Activated CD8-positive, alpha-beta T cell treated with anti-CD3 and anti-CD28 coated beads, Interleukin-2, amount 10 ng/mL, durations not matched to agents 7 days and 5 days (primary cell): ENCODE measurements at regions of chr17 and their contacts with region 1.

Region 1: DNA sequence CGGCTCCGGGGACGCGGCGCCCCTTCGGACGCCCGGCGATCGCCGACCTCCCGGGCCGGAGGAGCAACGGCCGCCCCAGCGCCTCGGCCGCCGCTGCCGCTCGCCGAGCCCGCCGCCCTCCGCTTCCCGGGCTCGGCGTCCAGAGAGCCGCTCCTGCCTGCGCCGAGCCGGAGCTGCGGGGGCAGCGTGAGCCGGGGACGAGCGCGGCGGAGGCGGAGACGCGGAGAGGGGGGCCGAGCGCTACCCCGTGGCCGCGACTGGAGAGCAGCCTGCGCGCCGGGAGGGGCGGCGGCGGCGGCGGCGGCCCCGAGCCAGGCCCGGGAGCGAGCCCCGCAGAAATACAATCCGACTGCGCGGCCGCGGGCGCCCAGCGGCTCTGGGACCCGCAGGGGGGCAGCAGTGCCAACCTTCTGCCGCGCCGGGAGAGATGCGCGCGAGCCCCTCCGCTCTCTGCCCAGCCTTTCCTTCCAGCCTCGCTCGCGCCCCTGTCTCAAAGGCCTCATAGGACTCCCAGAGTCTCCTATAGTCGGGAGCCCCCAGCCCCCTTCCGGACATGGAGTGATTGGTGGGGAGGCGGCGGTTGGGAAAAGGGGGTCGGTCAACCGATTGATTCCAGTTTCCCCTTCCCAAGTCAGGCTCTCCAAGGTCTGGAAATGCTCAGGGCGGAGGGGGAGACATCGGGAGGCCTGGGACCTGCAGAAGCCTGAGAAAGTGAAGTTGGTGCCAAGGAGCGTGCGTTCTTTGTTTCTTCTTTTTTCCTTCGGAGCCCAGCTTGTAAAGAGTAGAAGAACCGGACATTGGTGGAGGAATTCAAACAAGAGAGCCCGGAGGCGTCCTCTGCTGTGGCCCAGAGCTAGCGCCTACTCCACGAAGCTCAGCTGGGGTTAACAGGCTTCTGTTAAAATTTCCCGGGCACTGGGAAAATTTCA is 1.1 kb upstream of the SDK2 start:
- DNase-seq: peak; percentile 65
- ATAC-seq: peak; percentile 63
- H3K4me3 Mint-ChIP-seq: peak overlapping the region; percentile 57
- H3K27ac Mint-ChIP-seq: no peak overlapping the region
- H3K4me1 Mint-ChIP-seq: peaks cover 25% of the 10 kb centered on the region
- H3K27me3 Mint-ChIP-seq: peaks cover 44% of the 10 kb centered on the region

Region 2: GRCh38 chr17:73429440-73430164 is 215.7 kb before region 1 on chr17:
- CTCF ChIA-PET with region 1: interaction called, 41 read pairs
- POLR2A ChIA-PET with region 1: no interaction called
- DNase-seq: peak; percentile 91
- ATAC-seq: peak; percentile 94
- H3K4me3 Mint-ChIP-seq: no peak overlapping the region
- H3K27ac Mint-ChIP-seq: peak overlapping the region; percentile 72
- H3K4me1 Mint-ChIP-seq: peaks cover 24% of the 10 kb centered on the region
- H3K27me3 Mint-ChIP-seq: no peaks in the 10 kb centered on the region

Region 3: GRCh38 chr17:73585583-73585982 is 59.7 kb before region 1 on chr17:
- CTCF ChIA-PET with region 1: interaction called, 19 read pairs
- POLR2A ChIA-PET with region 1: no interaction called
- DNase-seq: no peak
- ATAC-seq: no peak
- H3K4me3 Mint-ChIP-seq: no peak overlapping the region
- H3K27ac Mint-ChIP-seq: no peak overlapping the region
- H3K4me1 Mint-ChIP-seq: peaks cover 44% of the 10 kb centered on the region
- H3K27me3 Mint-ChIP-seq: no peaks in the 10 kb centered on the region

Region 4: GRCh38 chr17:73635101-73635817 is 10.1 kb before region 1 on chr17:
- CTCF ChIA-PET with region 1: interaction called, 10 read pairs
- POLR2A ChIA-PET with region 1: no interaction called
- DNase-seq: no peak
- ATAC-seq: no peak
- H3K4me3 Mint-ChIP-seq: no peak overlapping the region
- H3K27ac Mint-ChIP-seq: no peak overlapping the region
- H3K4me1 Mint-ChIP-seq: peaks cover 5% of the 10 kb centered on the region
- H3K27me3 Mint-ChIP-seq: no peaks in the 10 kb centered on the region

Region 5: DNA sequence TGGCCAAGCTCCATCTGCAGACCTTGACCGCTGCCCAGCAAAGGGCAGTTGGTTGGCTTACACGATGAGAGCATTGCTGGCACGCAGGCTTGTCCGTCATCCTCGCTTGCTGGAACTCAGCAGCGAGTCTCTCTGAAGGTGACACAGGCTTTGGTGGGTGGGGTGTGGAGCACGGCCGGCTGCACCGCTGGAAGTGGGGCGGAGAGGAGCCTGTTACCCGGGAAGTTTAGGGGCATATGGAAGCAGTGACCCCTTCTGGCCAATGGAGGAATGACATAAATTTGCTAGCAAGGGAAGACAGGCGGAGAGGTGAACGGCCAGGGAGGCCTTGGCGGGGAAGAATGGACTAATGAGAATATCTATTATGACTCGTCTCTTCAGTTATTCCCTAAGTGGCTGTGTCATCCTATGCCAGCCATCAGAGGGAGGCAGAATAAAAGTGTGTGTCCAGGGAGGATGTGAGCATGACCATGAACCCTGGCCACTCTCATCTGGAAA is 64.8 kb after region 1 on chr17:
- CTCF ChIA-PET with region 1: interaction called, 35 read pairs
- POLR2A ChIA-PET with region 1: interaction called, 4 read pairs
- DNase-seq: peak; percentile 82
- ATAC-seq: peak; percentile 66
- H3K4me3 Mint-ChIP-seq: no peak overlapping the region
- H3K27ac Mint-ChIP-seq: no peak overlapping the region
- H3K4me1 Mint-ChIP-seq: peaks cover 13% of the 10 kb centered on the region
- H3K27me3 Mint-ChIP-seq: peaks cover 17% of the 10 kb centered on the region